ENCODE measurements at regions of chr7 and their contacts with region 1.

Region 1: GRCh38 chr7:150379441-150380245 is 513 bp downstream of the ZNF775 start:
- DNase-seq: no peak
- H3K4me3 ChIP-seq: peak overlapping the region; percentile 82 to 96
- H3K27ac ChIP-seq: peak overlapping the region; percentile 88
- H3K4me1 ChIP-seq: peaks cover 0 to 40% (median 11%) of the 10 kb centered on the region in 4 donors
- H3K27me3 ChIP-seq: no peaks in the 10 kb centered on the region
- CTCF ChIP-seq: no peak

Region 2: GRCh38 chr7:150335108-150335773 is 44.4 kb before region 1 on chr7:
- intact Hi-C with region 1: loop called (anchors 5 kb)
- DNase-seq: no peak
- H3K4me3 ChIP-seq: no peak overlapping the region
- H3K27ac ChIP-seq: peak overlapping the region; percentile 30 to 50
- H3K4me1 ChIP-seq: peaks cover 0 to 32% (median 22%) of the 10 kb centered on the region in 4 donors
- H3K27me3 ChIP-seq: no peaks in the 10 kb centered on the region
- CTCF ChIP-seq: no peak

Measured in tibial artery (tissue), 4 donors.